HCT116 (cell line): ENCODE measurements at regions of chr7 and their contacts with region 1.

Region 1: DNA sequence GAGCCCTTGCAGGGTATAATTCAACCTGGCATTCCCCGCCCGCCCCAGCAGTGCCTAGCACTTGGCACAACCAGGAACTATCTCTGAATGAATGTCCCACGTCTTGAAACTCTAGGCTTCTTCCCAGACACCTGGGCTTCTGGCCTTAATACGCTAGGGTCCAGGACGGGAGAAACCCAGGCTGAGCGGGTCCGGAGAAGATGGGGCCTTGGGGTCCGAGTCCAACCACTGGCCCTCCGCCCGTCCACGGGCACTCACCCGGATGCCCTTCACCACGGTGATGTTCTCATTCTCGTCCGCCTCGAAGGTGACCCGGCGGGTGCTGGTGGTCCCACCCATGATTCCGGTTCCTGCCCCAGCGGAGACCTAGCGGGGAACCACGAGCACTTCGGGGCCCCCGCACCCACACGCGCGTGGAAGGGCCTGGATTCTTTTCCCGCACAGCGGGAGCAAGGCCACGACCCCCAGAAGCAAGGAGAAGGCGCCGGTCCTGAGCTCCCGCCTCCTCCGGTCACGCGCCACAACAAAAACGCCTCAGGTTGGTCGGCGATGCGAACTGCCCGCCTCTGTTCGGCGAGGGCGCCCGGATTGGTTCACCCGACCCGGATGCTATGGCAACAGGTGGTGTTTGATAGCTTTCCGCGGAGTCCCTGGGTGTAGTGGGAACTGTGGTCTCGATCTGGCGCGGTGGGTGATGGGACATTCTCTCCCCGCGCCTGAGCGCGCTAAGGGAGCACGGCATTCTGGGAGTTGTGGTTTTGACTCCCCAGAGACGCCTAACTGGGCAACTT is at the start of gene CHCHD3:
- DNase-seq: peak; percentile 96
- ATAC-seq: peak; percentile 98
- H3K4me3 ChIP-seq: peak within 1 kb of the TSS; percentile 90 to 93
- H3K27ac ChIP-seq: peak within 1 kb of the TSS; percentile 62
- H3K4me1 ChIP-seq: peaks cover 0 to 10% of the 10 kb centered on the region in 2 experiments; a peak in 2 of 4 replicates
- H3K27me3 ChIP-seq: no peaks in the 10 kb centered on the region
- CTCF ChIP-seq: no peak
- POLR2A ChIP-seq: peak; percentile 28
- RAD21 ChIP-seq: no peak
- total RNA-seq, gene CHCHD3: 73.5 TPM

Region 2: DNA sequence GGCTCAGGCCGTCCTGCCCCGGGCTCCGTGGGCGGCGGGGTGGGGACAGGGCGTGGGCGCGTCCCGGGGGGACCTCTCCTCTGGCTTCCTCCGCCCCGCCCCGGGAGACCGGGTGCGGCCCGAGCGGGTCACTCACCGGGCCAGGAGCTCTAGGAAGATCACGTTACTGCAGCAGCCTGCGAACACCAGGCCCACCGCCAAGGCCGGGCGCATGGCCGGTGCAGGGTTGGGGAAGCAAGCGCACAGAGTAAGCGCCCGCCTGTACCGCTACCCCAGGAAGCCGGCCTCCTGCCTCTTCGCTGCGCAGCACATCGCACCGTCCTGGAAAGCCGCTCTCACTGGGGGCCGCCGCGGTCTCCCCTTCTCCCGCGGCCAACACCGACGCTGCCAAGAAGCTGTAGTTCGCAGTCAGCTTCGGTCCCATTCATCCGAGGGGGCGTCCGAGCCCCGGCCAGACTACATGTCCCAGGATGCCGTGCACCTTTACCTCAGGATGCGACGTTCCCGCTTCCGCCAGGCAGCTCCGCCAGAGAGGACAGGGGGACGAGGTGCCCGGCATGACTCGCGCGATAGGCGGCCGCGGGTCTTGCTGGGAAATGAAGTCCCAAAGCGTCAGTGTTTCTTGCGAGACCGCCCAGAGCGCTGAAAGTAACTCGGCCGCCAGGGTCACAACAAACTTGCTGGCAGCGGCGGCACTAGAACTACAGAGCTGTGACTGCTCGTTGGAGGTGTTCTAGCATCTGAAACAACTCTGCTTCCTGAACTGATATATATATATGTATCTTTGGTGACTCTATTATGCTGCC is 1234.9 kb after region 1 on chr7 and contains the start of gene SLC35B4:
- CTCF ChIA-PET with region 1: no interaction called
- POLR2A ChIA-PET with region 1: no interaction called
- RAD21 ChIA-PET with region 1: no interaction called
- intact Hi-C with region 1: loop called (anchors 10 kb)
- DNase-seq: peak; percentile 91
- ATAC-seq: peak; percentile 99
- H3K4me3 ChIP-seq: peak within 1 kb of the TSS; percentile 69 to 80
- H3K27ac ChIP-seq: peak within 1 kb of the TSS; percentile 31; the same call in 1 of the 2 replicates
- H3K4me1 ChIP-seq: peaks cover 3 to 12% of the 10 kb centered on the region in 2 experiments; a peak in 3 of 4 replicates
- H3K27me3 ChIP-seq: no peaks in the 10 kb centered on the region
- CTCF ChIP-seq: peak in 2 of 3 experiments; percentile 12 to 26; a peak in 1 of 6 replicates
- POLR2A ChIP-seq: peak; percentile 74
- RAD21 ChIP-seq: no peak
- total RNA-seq, gene SLC35B4: 14.7 TPM